ENCODE measurements at regions of chr12 and their contacts with region 1.

Region 1: DNA sequence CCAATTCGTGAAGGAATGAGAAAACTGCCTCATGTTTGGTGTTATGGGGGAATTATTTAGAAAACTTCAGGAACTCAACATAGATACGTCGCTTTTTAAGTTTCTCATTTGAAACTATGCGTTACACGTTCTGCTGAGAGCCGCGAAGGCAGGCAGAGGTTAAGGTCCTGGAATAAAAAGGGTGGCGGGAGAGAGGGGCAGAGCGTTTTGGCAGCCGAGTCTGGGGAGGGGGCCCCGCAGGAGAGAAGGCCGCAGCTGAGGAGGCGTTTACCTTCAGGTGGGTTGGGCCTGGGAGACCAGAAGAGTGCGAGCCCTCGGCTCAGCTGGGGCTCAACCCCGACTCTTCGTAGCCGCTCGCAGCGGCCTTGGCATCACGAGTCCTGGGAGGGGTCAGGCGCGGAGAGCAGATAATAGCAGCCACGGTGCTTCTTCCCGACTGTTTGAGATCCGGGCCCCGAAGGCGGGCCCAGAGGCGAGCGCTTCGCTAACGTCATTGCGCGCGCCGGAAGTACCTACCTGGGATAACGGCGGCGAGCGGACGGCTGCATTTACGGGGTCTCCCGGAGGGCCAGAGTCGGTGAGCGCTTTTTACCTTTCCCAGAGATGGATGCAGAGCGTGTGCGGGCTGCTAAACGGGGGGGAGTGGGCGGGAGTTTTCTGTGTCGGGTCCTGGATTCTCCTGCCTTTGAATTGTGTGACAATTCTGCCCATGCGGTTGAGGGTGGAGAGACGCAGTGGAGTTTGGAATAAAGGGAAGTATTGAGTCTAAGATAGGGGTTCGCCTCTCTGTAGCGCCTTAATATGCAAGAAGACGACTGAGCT is at the starts of genes PPHLN1 and ZCRB1:
- DNase-seq: peak; percentile 61 to 72 (median 61)
- H3K4me3 ChIP-seq: peak within 1 kb of the TSS; percentile 85 to 94 (median 92)
- H3K4me3 Mint-ChIP-seq: peak within 1 kb of the TSS; percentile 95 to 97
- H3K27ac ChIP-seq: peak within 1 kb of the TSS; percentile 79 to 87
- H3K27ac Mint-ChIP-seq: peak within 1 kb of the TSS; percentile 89 to 97 (median 96)
- H3K4me1 ChIP-seq: peaks cover 24 to 33% of the 10 kb centered on the region in 2 donors
- H3K4me1 Mint-ChIP-seq: peaks cover 38% of the 10 kb centered on the region
- H3K27me3 ChIP-seq: no peaks in the 10 kb centered on the region
- H3K27me3 Mint-ChIP-seq: peaks cover 0 to under 1% (median 0%) of the 10 kb centered on the region in 3 donors
- CTCF ChIP-seq: no peak
- polyA plus RNA-seq, gene PPHLN1: 40.7 to 74.8 (median 68.7) TPM
- polyA plus RNA-seq, gene ZCRB1: 9.2 to 34.4 (median 32.2) TPM

Region 2: GRCh38 chr12:41795910-41796309 is 530.0 kb before region 1 on chr12:
- intact Hi-C with region 1: no loop called
- DNase-seq: no peak
- H3K4me3 ChIP-seq: no peak overlapping the region
- H3K4me3 Mint-ChIP-seq: no peak overlapping the region
- H3K27ac ChIP-seq: no peak overlapping the region
- H3K27ac Mint-ChIP-seq: no peak overlapping the region
- H3K4me1 ChIP-seq: no peaks in the 10 kb centered on the region
- H3K4me1 Mint-ChIP-seq: no peaks in the 10 kb centered on the region
- H3K27me3 ChIP-seq: no peaks in the 10 kb centered on the region
- H3K27me3 Mint-ChIP-seq: no peaks in the 10 kb centered on the region
- CTCF ChIP-seq: no peak

Region 3: GRCh38 chr12:42144408-42145196 is 181.3 kb before region 1 on chr12 and contains the start of gene GXYLT1:
- intact Hi-C with region 1: loop called in 1 of 2 experiments (anchors 10 kb)
- DNase-seq: peak; percentile 90 to 93 (median 92)
- H3K4me3 ChIP-seq: peak within 1 kb of the TSS; percentile 62 to 90 (median 82)
- H3K4me3 Mint-ChIP-seq: peak within 1 kb of the TSS; percentile 97 to 98
- H3K27ac ChIP-seq: peak within 1 kb of the TSS; percentile 32 to 70
- H3K27ac Mint-ChIP-seq: peak within 1 kb of the TSS; percentile 85 to 94 (median 91)
- H3K4me1 ChIP-seq: peaks cover 16 to 34% of the 10 kb centered on the region in 2 donors
- H3K4me1 Mint-ChIP-seq: peaks cover 38% of the 10 kb centered on the region
- H3K27me3 ChIP-seq: no peaks in the 10 kb centered on the region
- H3K27me3 Mint-ChIP-seq: peaks cover 0 to 3% (median 3%) of the 10 kb centered on the region in 3 donors
- CTCF ChIP-seq: no peak
- polyA plus RNA-seq, gene GXYLT1: 2.5 to 7.1 (median 4.9) TPM

Region 4: DNA sequence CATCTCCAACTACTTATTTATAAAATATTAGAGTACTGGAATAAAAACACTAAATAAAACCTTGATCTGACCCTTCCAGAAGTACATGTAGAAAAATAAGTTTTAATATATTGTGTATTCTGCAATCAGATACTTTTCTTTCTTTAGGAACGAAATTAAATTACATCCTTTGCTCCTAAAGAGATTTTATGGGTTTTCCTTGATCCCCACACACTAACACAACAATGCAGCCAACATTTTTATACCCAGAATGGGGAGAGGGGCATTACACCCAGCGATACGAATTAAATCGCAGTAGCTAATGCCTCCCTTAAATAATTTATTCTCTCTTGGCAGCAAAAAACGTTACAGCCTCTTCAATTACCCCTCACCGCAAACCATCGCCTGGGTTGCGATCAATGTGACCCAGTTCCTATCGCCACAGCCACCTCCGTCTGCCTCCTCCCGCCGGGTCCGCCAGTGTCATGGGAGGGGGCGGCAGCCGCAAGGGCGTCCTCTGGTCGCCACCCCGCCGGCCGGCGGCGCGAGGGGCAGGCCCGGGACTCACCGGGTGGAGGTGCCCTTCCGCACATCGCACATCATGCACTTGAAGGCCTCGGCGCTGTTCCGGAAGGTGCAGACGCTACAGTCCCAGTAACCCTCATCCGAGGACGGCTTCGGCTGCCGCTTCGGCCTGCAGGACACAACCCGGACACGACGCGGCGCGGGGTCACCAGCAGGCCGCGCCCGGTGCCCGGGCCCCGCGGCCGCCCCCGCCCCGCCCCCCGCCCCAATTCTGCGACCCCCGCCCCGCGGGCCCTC is 88.6 kb before region 1 on chr12:
- intact Hi-C with region 1: loop called (anchors 5 kb)
- DNase-seq: peak; percentile 69 to 80 (median 75)
- H3K4me3 ChIP-seq: peak overlapping the region; percentile 51 to 92 (median 80)
- H3K4me3 Mint-ChIP-seq: peak overlapping the region; percentile 86 to 94
- H3K27ac ChIP-seq: peak overlapping the region; percentile 33 to 66
- H3K27ac Mint-ChIP-seq: peak overlapping the region; percentile 40 to 92 (median 87)
- H3K4me1 ChIP-seq: peaks cover 10 to 24% of the 10 kb centered on the region in 2 donors
- H3K4me1 Mint-ChIP-seq: peaks cover 30% of the 10 kb centered on the region
- H3K27me3 ChIP-seq: no peaks in the 10 kb centered on the region
- H3K27me3 Mint-ChIP-seq: peaks cover 0 to 5% (median 2%) of the 10 kb centered on the region in 3 donors
- CTCF ChIP-seq: peak; percentile 56

Measured in CD14-positive monocyte (primary cell).